Uterus (tissue), 4 donors: ENCODE measurements at regions of chr3 and their contacts with region 1.

Region 1: GRCh38 chr3:156674046-156674910 is at the start of gene TIPARP:
- DNase-seq: peak; percentile 99 to 100
- H3K4me3 ChIP-seq: peak within 1 kb of the TSS; percentile 87 to 93
- H3K27ac ChIP-seq: peak within 1 kb of the TSS; percentile 95 to 98
- H3K4me1 ChIP-seq: peaks cover 0 to 4% of the 10 kb centered on the region in 2 donors
- H3K27me3 ChIP-seq: no peaks in the 10 kb centered on the region
- CTCF ChIP-seq: peak; percentile 76 to 92 (median 88)
- POLR2A ChIP-seq: peak; percentile 99
- total RNA-seq, gene TIPARP: 17.9 to 58.5 (median 52.5) TPM

Region 2: GRCh38 chr3:156816800-156817645 is 142.7 kb after region 1 on chr3:
- intact Hi-C with region 1: loop called (anchors 10 kb)
- DNase-seq: peak; percentile 70 to 76
- H3K4me3 ChIP-seq: peak overlapping the region; percentile 44 to 55
- H3K27ac ChIP-seq: peak overlapping the region; percentile 77 to 83
- H3K4me1 ChIP-seq: peaks cover 0 to 7% of the 10 kb centered on the region in 2 donors
- H3K27me3 ChIP-seq: no peaks in the 10 kb centered on the region
- CTCF ChIP-seq: peak in 1 of 4 experiments; percentile 29
- POLR2A ChIP-seq: peak in 1 of 2 donors; percentile 49

Region 3: DNA sequence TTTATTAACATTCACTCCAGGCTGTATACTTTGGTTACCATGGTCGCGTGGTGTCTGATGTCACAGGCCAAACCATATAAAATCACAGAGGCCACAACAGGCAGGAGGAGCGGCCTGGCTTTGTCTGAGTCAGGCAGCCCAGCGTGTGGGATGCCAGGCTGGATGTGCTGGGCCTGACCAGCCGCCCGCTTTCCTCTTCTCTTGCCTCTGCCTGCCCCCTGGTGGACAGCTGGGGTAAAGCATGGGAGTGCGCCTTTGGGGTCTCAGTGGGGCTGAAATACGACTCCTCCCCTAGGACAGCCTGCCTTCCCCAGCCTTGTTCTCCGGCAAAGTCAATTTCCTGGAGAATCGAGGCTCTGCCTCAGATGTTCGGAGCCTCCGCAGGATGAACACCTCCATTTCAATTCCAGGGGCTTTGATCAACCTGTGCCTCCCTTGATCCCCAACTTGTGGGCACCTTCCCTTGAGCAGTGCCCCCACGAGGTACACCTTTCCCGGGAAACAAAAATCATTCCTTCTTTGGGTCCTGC is 407.5 kb after region 1 on chr3:
- intact Hi-C with region 1: loop called (anchors 10 kb)
- DNase-seq: peak; percentile 90
- H3K4me3 ChIP-seq: no peak overlapping the region
- H3K27ac ChIP-seq: peak overlapping the region in 1 of 2 donors; percentile 56
- H3K4me1 ChIP-seq: peaks cover 0 to 2% of the 10 kb centered on the region in 2 donors
- H3K27me3 ChIP-seq: no peaks in the 10 kb centered on the region
- CTCF ChIP-seq: peak; percentile 93 to 97 (median 95)
- POLR2A ChIP-seq: peak in 1 of 2 donors; percentile 42

Region 4: GRCh38 chr3:157130467-157131251 is 456.4 kb after region 1 on chr3:
- intact Hi-C with region 1: loop called (anchors 10 kb)
- DNase-seq: peak; percentile 46 to 59
- H3K4me3 ChIP-seq: no peak overlapping the region
- H3K27ac ChIP-seq: peak overlapping the region; percentile 86 to 88
- H3K4me1 ChIP-seq: peaks cover 8 to 22% of the 10 kb centered on the region in 2 donors
- H3K27me3 ChIP-seq: no peaks in the 10 kb centered on the region
- CTCF ChIP-seq: peak; percentile 24 to 58 (median 53)
- POLR2A ChIP-seq: no peak